CD8-positive, alpha-beta T cell (primary cell): ENCODE measurements at regions of chr15 and their contacts with region 1.

Region 1: GRCh38 chr15:74322181-74323076 is 45.0 kb downstream of the CYP11A1 start:
- DNase-seq: peak; percentile 42 to 79 (median 57)
- ATAC-seq: peak; percentile 82
- H3K4me3 ChIP-seq: no peak overlapping the region
- H3K4me3 Mint-ChIP-seq: no peak overlapping the region
- H3K27ac ChIP-seq: no peak overlapping the region
- H3K27ac Mint-ChIP-seq: no peak overlapping the region
- H3K4me1 ChIP-seq: peaks cover 34% of the 10 kb centered on the region
- H3K4me1 Mint-ChIP-seq: peaks cover 22% of the 10 kb centered on the region
- H3K27me3 ChIP-seq: no peaks in the 10 kb centered on the region
- H3K27me3 Mint-ChIP-seq: peaks cover 4% of the 10 kb centered on the region
- CTCF ChIP-seq: peak; percentile 69

Region 2: DNA sequence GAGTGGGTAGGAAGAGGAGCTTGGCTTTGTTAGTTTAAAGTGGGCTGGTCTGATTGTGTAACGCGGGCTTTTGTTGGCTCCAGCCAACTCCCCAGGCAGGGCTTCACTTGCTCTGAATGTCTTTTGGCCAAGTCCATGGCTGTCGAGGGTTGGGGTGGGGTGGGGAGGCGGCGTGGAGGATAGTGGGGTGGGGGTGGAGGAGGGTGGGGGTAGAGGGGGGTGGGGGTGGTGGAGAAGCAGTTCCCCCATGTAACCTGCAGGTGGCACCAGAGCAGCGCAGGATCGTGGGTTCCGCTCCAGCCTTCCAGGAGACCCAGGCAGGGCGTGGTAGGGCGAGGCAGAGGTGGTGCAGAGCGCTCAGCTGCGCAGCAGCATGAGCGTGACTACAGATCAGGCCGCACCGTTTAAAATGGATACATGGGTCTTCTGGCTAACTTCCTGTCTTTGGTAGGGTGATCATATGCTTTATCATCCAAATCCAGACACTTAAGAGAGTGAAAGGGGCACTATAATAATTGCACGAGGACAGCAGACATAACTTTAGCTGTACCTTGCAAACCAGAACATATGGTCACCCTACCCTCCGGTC is 268.4 kb before region 1 on chr15:
- CTCF ChIA-PET with region 1: interaction called, 25 read pairs
- POLR2A ChIA-PET with region 1: no interaction called
- intact Hi-C with region 1: loop called in 1 of 2 experiments (anchors 2 kb)
- DNase-seq: peak; percentile 26 to 80 (median 70)
- ATAC-seq: peak; percentile 100
- H3K4me3 ChIP-seq: no peak overlapping the region
- H3K4me3 Mint-ChIP-seq: no peak overlapping the region
- H3K27ac ChIP-seq: no peak overlapping the region
- H3K27ac Mint-ChIP-seq: no peak overlapping the region
- H3K4me1 ChIP-seq: peaks cover 7% of the 10 kb centered on the region
- H3K4me1 Mint-ChIP-seq: peaks cover 21% of the 10 kb centered on the region
- H3K27me3 ChIP-seq: no peaks in the 10 kb centered on the region
- H3K27me3 Mint-ChIP-seq: no peaks in the 10 kb centered on the region
- CTCF ChIP-seq: no peak

Region 3: DNA sequence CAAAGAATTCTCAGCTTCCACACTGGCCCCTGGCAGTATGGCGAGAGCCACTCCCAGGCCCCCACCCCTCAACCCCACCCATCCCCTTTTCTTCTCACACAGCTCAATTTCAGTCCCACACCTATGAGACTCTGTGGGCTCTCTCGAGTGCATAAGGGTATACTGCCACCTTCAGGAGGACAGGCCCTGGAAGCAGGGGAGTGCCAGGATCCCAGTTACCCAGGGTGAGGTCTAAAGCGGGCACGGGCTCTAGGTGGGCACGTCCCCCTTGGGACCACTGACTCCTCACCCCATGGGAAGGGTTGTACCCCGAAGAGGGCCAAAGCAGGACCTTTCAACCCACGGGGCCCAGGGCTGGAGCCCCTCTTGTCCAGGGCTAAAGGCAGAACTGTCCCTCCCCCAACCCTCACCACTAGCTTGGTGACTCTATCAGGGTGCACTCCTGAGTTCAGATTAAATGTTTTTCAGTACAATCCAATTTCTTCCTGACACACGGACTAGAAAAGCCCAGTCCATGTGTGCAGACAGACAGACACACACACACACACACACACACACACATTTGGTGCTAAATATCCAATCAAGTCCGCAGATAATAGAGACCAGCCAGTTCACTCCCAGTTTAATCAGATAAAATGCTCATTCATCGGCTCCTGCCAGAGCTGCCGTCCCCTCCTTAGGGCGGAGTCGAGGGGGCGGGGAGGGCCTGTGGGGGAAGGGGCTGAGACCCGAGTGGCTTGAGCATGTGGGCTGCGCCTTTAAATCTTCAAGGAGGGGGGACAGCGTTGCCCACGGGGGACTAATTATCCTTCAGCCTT is 14.4 kb before region 1 on chr15:
- CTCF ChIA-PET with region 1: interaction called, 41 read pairs
- POLR2A ChIA-PET with region 1: no interaction called
- intact Hi-C with region 1: no loop called
- DNase-seq: peak in 5 of 9 experiments; percentile 17 to 61 (median 39)
- ATAC-seq: no peak
- H3K4me3 ChIP-seq: no peak overlapping the region
- H3K4me3 Mint-ChIP-seq: no peak overlapping the region
- H3K27ac ChIP-seq: no peak overlapping the region
- H3K27ac Mint-ChIP-seq: no peak overlapping the region
- H3K4me1 ChIP-seq: peaks cover 10% of the 10 kb centered on the region
- H3K4me1 Mint-ChIP-seq: peaks cover 3% of the 10 kb centered on the region
- H3K27me3 ChIP-seq: no peaks in the 10 kb centered on the region
- H3K27me3 Mint-ChIP-seq: peaks cover 29% of the 10 kb centered on the region
- CTCF ChIP-seq: peak; percentile 23